ENCODE measurements at regions of chr7 and their contacts with region 1.

Region 1: DNA sequence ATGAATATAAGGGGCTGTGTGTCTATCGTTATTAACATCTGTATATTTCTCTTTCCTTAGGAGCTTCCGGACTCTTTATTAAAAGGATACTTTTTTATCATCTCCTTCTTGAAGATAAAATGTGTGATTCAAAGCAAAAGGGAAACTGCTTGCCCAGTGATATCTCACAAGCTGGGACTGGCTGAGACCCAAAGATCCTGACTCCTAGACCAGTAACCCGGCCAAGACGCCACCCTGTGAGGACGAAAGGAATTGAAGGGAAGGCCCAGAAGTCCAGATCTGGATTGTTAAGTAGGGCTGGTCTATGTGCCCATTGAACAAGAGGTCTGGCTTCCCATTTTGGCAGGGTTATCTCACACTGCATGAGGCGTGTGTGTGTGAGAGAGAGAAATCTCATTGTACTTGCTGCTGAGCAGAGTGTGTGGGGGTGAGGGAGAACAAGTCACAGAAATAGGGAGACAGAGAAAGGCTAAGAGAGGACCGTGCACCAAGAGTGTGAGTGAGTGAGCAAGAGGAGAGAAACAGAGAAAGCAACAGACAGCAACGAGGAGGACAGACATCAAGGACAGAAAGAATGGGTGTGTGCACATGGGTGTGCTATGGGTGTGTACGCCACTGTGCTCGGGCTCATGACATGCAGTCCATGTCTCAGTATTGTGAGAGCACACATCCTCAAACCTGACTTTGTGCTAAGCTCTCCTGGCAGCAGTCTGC is 75.4 kb downstream of the PLXNA4 start:
- DNase-seq: peak; percentile 95
- H3K4me3 ChIP-seq: no peak overlapping the region
- H3K27ac ChIP-seq: peak overlapping the region; percentile 89
- H3K4me1 ChIP-seq: peaks cover 35% of the 10 kb centered on the region
- H3K27me3 ChIP-seq: no peaks in the 10 kb centered on the region
- CTCF ChIP-seq: peak; percentile 70 to 71
- POLR2A ChIP-seq: no peak

Region 2: GRCh38 chr7:131107337-131108211 is 1393.3 kb before region 1 on chr7:
- CTCF ChIA-PET with region 1: no interaction called
- POLR2A ChIA-PET with region 1: no interaction called
- dilution Hi-C with region 1: no loop called
- intact Hi-C with region 1: no loop called
- DNase-seq: peak; percentile 92
- H3K4me3 ChIP-seq: peak overlapping the region; percentile 61 to 79 (median 63)
- H3K27ac ChIP-seq: peak overlapping the region; percentile 98
- H3K4me1 ChIP-seq: peaks cover 41% of the 10 kb centered on the region
- H3K27me3 ChIP-seq: no peaks in the 10 kb centered on the region
- CTCF ChIP-seq: no peak
- POLR2A ChIP-seq: no peak

Region 3: GRCh38 chr7:131945313-131945911 is 555.5 kb before region 1 on chr7:
- CTCF ChIA-PET with region 1: no interaction called
- POLR2A ChIA-PET with region 1: no interaction called
- dilution Hi-C with region 1: no loop called
- intact Hi-C with region 1: loop called (anchors 2 kb)
- DNase-seq: peak; percentile 46
- H3K4me3 ChIP-seq: no peak overlapping the region
- H3K27ac ChIP-seq: no peak overlapping the region
- H3K4me1 ChIP-seq: peaks cover 9% of the 10 kb centered on the region
- H3K27me3 ChIP-seq: peaks cover 8 to 19% of the 10 kb centered on the region in 2 experiments
- CTCF ChIP-seq: peak; percentile 89 to 93
- POLR2A ChIP-seq: no peak

Region 4: DNA sequence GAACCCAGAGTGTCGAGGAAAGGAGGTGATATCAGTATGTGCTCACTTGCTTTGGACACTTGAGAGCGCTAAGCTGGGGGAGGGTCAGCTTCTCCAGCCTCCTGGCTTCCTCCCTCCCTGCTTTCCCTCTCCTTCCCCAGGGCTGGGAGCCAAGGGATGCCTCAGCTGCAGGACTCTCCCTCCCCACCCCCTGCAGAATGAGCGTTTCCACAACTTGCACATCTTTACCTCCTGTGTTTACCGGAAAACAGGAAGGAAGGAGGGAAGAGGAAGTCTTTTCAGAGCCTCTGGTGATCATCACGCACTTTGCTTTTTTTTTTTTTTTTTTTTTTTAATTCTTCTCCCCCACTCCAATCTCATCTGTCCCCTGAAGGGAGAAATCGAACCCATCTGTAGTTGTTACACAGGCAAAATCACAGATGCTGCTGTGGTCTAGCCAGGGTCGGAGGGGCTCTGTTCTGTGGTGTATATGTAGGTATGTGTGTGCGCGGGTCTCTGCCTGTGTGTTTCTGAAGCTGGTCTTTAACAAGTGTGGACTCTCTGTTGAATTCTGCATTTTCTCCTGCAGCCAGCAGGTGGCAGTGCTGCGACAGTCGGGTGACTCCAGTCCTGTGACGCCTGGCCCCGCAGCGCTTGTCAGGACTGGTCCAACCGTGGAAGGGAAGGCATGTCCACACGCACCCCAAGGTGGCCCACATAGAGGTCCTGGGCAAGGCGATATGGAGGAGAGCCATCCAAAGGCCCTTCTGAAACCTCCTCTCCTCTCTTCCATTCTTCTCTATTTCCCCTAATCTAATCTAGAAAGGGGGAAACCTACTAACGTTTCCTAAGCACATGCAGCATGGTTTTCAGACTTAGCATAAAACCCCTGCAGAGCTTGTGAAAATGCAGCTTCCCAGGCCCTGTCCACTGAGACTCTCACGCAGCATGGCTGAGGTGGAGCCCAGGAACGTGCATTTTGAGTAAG is 182.2 kb before region 1 on chr7:
- CTCF ChIA-PET with region 1: interaction called, 71 read pairs
- POLR2A ChIA-PET with region 1: no interaction called
- dilution Hi-C with region 1: no loop called
- intact Hi-C with region 1: loop called (anchors 1 kb)
- DNase-seq: peak; percentile 91
- H3K4me3 ChIP-seq: no peak overlapping the region
- H3K27ac ChIP-seq: no peak overlapping the region
- H3K4me1 ChIP-seq: peaks cover 22% of the 10 kb centered on the region
- H3K27me3 ChIP-seq: no peaks in the 10 kb centered on the region
- CTCF ChIP-seq: peak; percentile 84 to 89
- POLR2A ChIP-seq: no peak

Region 5: GRCh38 chr7:132419542-132419941 is 81.3 kb before region 1 on chr7:
- CTCF ChIA-PET with region 1: interaction called, 3 read pairs
- POLR2A ChIA-PET with region 1: no interaction called
- dilution Hi-C with region 1: no loop called
- intact Hi-C with region 1: loop called (anchors 1 kb)
- DNase-seq: peak; percentile 96
- H3K4me3 ChIP-seq: no peak overlapping the region
- H3K27ac ChIP-seq: peak overlapping the region; percentile 87
- H3K4me1 ChIP-seq: peaks cover 57% of the 10 kb centered on the region
- H3K27me3 ChIP-seq: no peaks in the 10 kb centered on the region
- CTCF ChIP-seq: no peak
- POLR2A ChIP-seq: peak; percentile 81

Region 6: DNA sequence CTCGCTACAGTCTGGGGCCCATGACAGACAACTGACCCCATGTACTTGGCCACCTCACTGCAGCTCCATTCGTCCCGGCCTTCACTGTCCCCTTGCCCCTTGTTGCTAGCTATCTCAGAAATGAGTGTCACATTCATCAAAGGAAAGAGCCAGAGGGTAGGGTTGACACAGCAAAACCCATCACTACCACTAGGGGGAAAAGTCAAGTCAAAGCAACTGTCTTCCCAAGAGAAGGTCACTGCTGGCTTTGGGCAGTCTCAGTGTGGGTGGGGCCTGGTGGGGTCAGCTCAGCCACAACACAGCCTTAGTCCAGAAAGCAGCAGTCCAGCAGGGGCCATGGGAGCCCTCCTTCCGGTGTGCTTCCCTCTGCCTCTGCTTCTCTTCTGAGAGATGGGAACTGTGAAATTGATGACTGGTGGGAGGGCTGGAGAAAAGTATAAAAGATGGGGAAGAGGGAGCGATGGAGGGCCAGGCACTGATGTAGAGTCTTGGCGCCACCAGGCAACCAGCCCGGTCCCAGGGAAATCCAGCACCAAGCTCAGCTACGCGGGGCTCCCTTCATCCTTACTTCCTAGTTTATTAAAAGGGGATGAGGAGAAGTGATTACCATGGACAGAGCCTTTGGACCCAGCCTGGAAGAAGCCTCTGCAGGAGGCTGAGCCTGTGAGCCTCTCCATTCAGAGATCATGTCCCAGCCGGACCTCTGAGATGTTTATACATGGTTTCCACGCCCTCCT is 17.4 kb after region 1 on chr7:
- CTCF ChIA-PET with region 1: interaction called, 9 read pairs
- POLR2A ChIA-PET with region 1: no interaction called
- dilution Hi-C with region 1: no loop called
- intact Hi-C with region 1: loop called (anchors 1 kb)
- DNase-seq: peak; percentile 14
- H3K4me3 ChIP-seq: no peak overlapping the region
- H3K27ac ChIP-seq: no peak overlapping the region
- H3K4me1 ChIP-seq: no peaks in the 10 kb centered on the region
- H3K27me3 ChIP-seq: no peaks in the 10 kb centered on the region
- CTCF ChIP-seq: peak; percentile 45 to 48
- POLR2A ChIP-seq: no peak

Region 7: GRCh38 chr7:132575419-132575981 is 74.6 kb after region 1 on chr7:
- CTCF ChIA-PET with region 1: interaction called, 28 read pairs
- POLR2A ChIA-PET with region 1: no interaction called
- dilution Hi-C with region 1: no loop called
- intact Hi-C with region 1: loop called (anchors 1 kb)
- DNase-seq: peak; percentile 71
- H3K4me3 ChIP-seq: peak overlapping the region; percentile 34 to 73 (median 73)
- H3K27ac ChIP-seq: peak overlapping the region; percentile 7
- H3K4me1 ChIP-seq: peaks cover 54% of the 10 kb centered on the region
- H3K27me3 ChIP-seq: no peaks in the 10 kb centered on the region
- CTCF ChIP-seq: peak in 1 of 2 donors; percentile 44
- POLR2A ChIP-seq: no peak

Region 8: DNA sequence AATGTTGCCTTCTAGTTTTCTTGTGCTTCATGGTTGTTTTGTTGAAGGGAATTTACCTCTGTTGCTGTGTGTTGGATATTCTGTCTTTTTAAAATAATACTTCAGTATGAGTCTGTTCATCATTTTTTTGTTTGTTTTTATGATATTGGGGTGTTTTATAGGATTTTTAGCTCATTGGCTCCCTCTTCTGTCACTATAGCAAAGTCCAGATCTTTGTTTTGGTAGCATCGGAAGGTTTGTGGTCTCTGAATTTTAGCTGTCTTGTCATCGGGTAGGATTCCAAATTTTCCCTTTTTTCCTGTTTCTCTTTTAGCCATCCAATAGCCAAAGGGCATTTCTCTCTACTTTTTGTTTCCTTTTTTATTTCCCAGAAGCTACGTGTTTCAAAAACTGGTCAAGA is 843.4 kb after region 1 on chr7:
- CTCF ChIA-PET with region 1: interaction called, 3 read pairs
- POLR2A ChIA-PET with region 1: no interaction called
- dilution Hi-C with region 1: no loop called
- intact Hi-C with region 1: loop called (anchors 10 kb)
- DNase-seq: peak; percentile 42
- H3K4me3 ChIP-seq: no peak overlapping the region
- H3K27ac ChIP-seq: no peak overlapping the region
- H3K4me1 ChIP-seq: no peaks in the 10 kb centered on the region
- H3K27me3 ChIP-seq: no peaks in the 10 kb centered on the region
- CTCF ChIP-seq: peak; percentile 28 to 34
- POLR2A ChIP-seq: no peak